Activated CD8-positive, alpha-beta T cell treated with anti-CD3 and anti-CD28 coated beads for 36 hours (primary cell): ENCODE measurements at regions of chr14 and their contacts with region 1.

Region 1: GRCh38 chr14:20446889-20447288 is 7.7 kb downstream of the OSGEP start:
- DNase-seq: no peak
- ATAC-seq: no peak
- H3K4me3 Mint-ChIP-seq: no peak overlapping the region
- H3K27ac Mint-ChIP-seq: peak overlapping the region; percentile 43
- H3K4me1 Mint-ChIP-seq: peaks cover 7% of the 10 kb centered on the region
- H3K27me3 Mint-ChIP-seq: no peaks in the 10 kb centered on the region
- CTCF ChIP-seq: no peak

Region 2: GRCh38 chr14:20434701-20435581 is 11.9 kb before region 1 on chr14:
- CTCF ChIA-PET with region 1: no interaction called
- POLR2A ChIA-PET with region 1: interaction called, 12 read pairs
- intact Hi-C with region 1: no loop called
- DNase-seq: no peak
- ATAC-seq: no peak
- H3K4me3 Mint-ChIP-seq: no peak overlapping the region
- H3K27ac Mint-ChIP-seq: no peak overlapping the region
- H3K4me1 Mint-ChIP-seq: peaks cover 3% of the 10 kb centered on the region
- H3K27me3 Mint-ChIP-seq: no peaks in the 10 kb centered on the region
- CTCF ChIP-seq: no peak